CD4-positive, alpha-beta T cell (primary cell): ENCODE measurements at regions of chr19 and their contacts with region 1.

Region 1: GRCh38 chr19:7197760-7198696 is 96.2 kb downstream of the INSR start:
- DNase-seq: peak; percentile 74 to 98 (median 88)
- ATAC-seq: peak; percentile 85
- H3K4me3 ChIP-seq: peak overlapping the region; percentile 65
- H3K4me3 Mint-ChIP-seq: peak overlapping the region; percentile 95
- H3K27ac ChIP-seq: peak overlapping the region; percentile 48 to 68
- H3K27ac Mint-ChIP-seq: peak overlapping the region; percentile 89
- H3K4me1 ChIP-seq: peaks cover 23% of the 10 kb centered on the region
- H3K4me1 Mint-ChIP-seq: peaks cover 12% of the 10 kb centered on the region
- H3K27me3 ChIP-seq: peaks cover 0 to 7% of the 10 kb centered on the region in 2 experiments
- H3K27me3 Mint-ChIP-seq: peaks cover 9% of the 10 kb centered on the region
- CTCF ChIP-seq: no peak

Region 2: GRCh38 chr19:6710273-6711077 is 487.6 kb before region 1 on chr19:
- CTCF ChIA-PET with region 1: no interaction called
- POLR2A ChIA-PET with region 1: no interaction called
- intact Hi-C with region 1: no loop called
- DNase-seq: peak in 4 of 14 experiments; percentile 11 to 53 (median 24)
- ATAC-seq: no peak
- H3K4me3 ChIP-seq: no peak overlapping the region
- H3K4me3 Mint-ChIP-seq: no peak overlapping the region
- H3K27ac ChIP-seq: no peak overlapping the region
- H3K27ac Mint-ChIP-seq: no peak overlapping the region
- H3K4me1 ChIP-seq: peaks cover 8% of the 10 kb centered on the region
- H3K4me1 Mint-ChIP-seq: peaks cover 13% of the 10 kb centered on the region
- H3K27me3 ChIP-seq: peaks cover 13 to 21% of the 10 kb centered on the region in 2 experiments
- H3K27me3 Mint-ChIP-seq: peaks cover 34% of the 10 kb centered on the region
- CTCF ChIP-seq: no peak

Region 3: GRCh38 chr19:7104747-7105447 is 93.1 kb before region 1 on chr19:
- CTCF ChIA-PET with region 1: no interaction called
- POLR2A ChIA-PET with region 1: no interaction called
- intact Hi-C with region 1: loop called in 1 of 2 experiments (anchors 5 kb)
- DNase-seq: peak in 1 of 14 experiments; percentile 10
- ATAC-seq: no peak
- H3K4me3 ChIP-seq: no peak overlapping the region
- H3K4me3 Mint-ChIP-seq: no peak overlapping the region
- H3K27ac ChIP-seq: no peak overlapping the region
- H3K27ac Mint-ChIP-seq: no peak overlapping the region
- H3K4me1 ChIP-seq: peaks cover 10% of the 10 kb centered on the region
- H3K4me1 Mint-ChIP-seq: peaks cover 22% of the 10 kb centered on the region
- H3K27me3 ChIP-seq: no peaks in the 10 kb centered on the region
- H3K27me3 Mint-ChIP-seq: no peaks in the 10 kb centered on the region
- CTCF ChIP-seq: no peak

Region 4: DNA sequence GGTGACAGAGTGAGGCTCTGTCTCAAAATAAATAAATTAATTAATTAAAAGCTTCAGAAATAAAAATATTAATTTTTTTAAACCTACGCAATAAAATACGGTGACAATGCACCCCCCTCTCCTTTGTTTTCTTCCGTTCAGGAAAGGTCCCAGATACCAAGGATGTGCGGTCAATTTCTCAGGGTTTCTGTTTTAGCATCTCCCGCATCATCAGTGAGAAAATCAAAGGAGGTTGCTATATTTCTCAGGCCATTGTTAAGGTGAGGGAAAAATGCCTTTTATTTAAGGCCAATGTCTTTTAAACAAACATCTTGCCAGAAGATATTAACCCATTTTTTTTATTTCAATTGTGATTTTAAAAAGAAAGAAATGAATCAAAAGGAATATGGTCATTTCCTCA is 15.5 kb before region 1 on chr19:
- CTCF ChIA-PET with region 1: interaction called, 3 read pairs
- POLR2A ChIA-PET with region 1: interaction called, 13 read pairs
- intact Hi-C with region 1: no loop called
- DNase-seq: no peak
- ATAC-seq: no peak
- H3K4me3 ChIP-seq: no peak overlapping the region
- H3K4me3 Mint-ChIP-seq: no peak overlapping the region
- H3K27ac ChIP-seq: no peak overlapping the region
- H3K27ac Mint-ChIP-seq: no peak overlapping the region
- H3K4me1 ChIP-seq: peaks cover 16% of the 10 kb centered on the region
- H3K4me1 Mint-ChIP-seq: peaks cover 18% of the 10 kb centered on the region
- H3K27me3 ChIP-seq: no peaks in the 10 kb centered on the region
- H3K27me3 Mint-ChIP-seq: no peaks in the 10 kb centered on the region
- CTCF ChIP-seq: no peak

Region 5: GRCh38 chr19:7348587-7349230 is 150.7 kb after region 1 on chr19 and contains the start of gene ARHGEF18:
- CTCF ChIA-PET with region 1: no interaction called
- POLR2A ChIA-PET with region 1: interaction called, 4 read pairs
- intact Hi-C with region 1: loop called (anchors 2 to 5 kb)
- DNase-seq: peak; percentile 34 to 94 (median 72)
- ATAC-seq: peak; percentile 73
- H3K4me3 ChIP-seq: peak within 1 kb of the TSS; percentile 84
- H3K4me3 Mint-ChIP-seq: peak within 1 kb of the TSS; percentile 99
- H3K27ac ChIP-seq: peak within 1 kb of the TSS; percentile 63 to 74
- H3K27ac Mint-ChIP-seq: peak within 1 kb of the TSS; percentile 92
- H3K4me1 ChIP-seq: peaks cover 78% of the 10 kb centered on the region
- H3K4me1 Mint-ChIP-seq: peaks cover 74% of the 10 kb centered on the region
- H3K27me3 ChIP-seq: no peaks in the 10 kb centered on the region
- H3K27me3 Mint-ChIP-seq: no peaks in the 10 kb centered on the region
- CTCF ChIP-seq: no peak
- total RNA-seq, gene ARHGEF18: 121 TPM

Region 6: GRCh38 chr19:8307965-8308866 is 1110.2 kb after region 1 on chr19 and contains the start of gene CD320:
- CTCF ChIA-PET with region 1: no interaction called
- POLR2A ChIA-PET with region 1: no interaction called
- intact Hi-C with region 1: loop called in 1 of 2 experiments (anchors 5 kb)
- DNase-seq: peak; percentile 66 to 92 (median 81)
- ATAC-seq: peak; percentile 83
- H3K4me3 ChIP-seq: peak within 1 kb of the TSS; percentile 67
- H3K4me3 Mint-ChIP-seq: peak within 1 kb of the TSS; percentile 93
- H3K27ac ChIP-seq: peak within 1 kb of the TSS; percentile 52 to 72
- H3K27ac Mint-ChIP-seq: peak within 1 kb of the TSS; percentile 83
- H3K4me1 ChIP-seq: peaks cover 47% of the 10 kb centered on the region
- H3K4me1 Mint-ChIP-seq: peaks cover 39% of the 10 kb centered on the region
- H3K27me3 ChIP-seq: no peaks in the 10 kb centered on the region
- H3K27me3 Mint-ChIP-seq: no peaks in the 10 kb centered on the region
- CTCF ChIP-seq: no peak
- total RNA-seq, gene CD320: 17.1 to 17.6 TPM